Right ventricle myocardium inferior (tissue), 1 donor: ENCODE measurements at regions of chr6 and their contacts with region 1.

Region 1: DNA sequence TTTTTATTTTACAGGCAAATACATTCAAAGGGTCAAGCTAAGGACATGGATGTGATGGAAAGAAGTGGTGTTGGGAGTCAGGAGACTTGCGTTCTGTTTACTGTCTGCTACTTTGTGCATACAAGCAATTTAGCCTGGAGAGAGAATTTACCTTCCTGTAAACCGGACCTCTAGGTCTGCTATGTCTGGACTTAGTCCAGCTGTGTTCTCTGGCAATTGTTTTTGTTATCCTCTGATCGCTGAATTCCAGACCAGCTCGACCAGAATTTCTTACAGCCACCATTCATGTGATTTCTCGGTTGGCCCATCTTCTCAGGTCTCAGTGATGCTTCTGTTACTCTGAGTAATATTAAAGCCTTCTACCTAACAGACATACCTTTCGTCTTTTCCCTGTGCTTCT is 75.1 kb downstream of the LRRC1 start:
- DNase-seq: no peak
- ATAC-seq: no peak

Region 2: GRCh38 chr6:53794720-53795253 is 75.2 kb before region 1 on chr6 and contains the start of gene LRRC1:
- intact Hi-C with region 1: loop called (anchors 2 kb)
- DNase-seq: peak; percentile 95
- ATAC-seq: peak; percentile 97
- total RNA-seq, gene LRRC1: 1.1 TPM